Posterior vena cava (tissue), 2 donors: ENCODE measurements at regions of chr1 and their contacts with region 1.

Region 1: GRCh38 chr1:173476664-173477285 is 360 bp upstream of the PRDX6 start:
- DNase-seq: peak; percentile 97

Region 2: GRCh38 chr1:173429471-173430402 is 47.0 kb before region 1 on chr1:
- intact Hi-C with region 1: loop called in 1 of 2 experiments (anchors 5 kb)
- DNase-seq: peak; percentile 97

Region 3: DNA sequence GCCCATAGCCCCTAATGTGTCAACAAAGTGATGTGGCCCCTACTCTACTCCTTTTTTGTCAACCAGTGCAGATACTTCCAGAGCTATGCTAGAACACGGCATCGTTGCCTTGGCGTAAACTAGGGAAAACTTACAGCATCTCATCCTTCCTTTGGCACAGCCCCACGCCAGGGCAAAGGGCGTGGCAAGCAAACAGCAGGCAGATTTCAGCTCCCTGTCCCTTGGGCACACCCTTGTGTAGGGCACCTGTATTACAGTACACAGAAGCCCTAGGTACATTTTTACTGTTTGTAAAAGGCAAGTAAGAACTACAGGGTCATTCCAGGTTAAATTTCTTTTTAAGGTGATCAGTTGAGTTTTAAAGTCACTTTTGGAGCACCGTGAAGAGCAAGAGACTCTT is 29.7 kb after region 1 on chr1:
- intact Hi-C with region 1: no loop called
- DNase-seq: no peak

Region 4: GRCh38 chr1:173714759-173715537 is 238.2 kb after region 1 on chr1 and contains the start of gene KLHL20:
- intact Hi-C with region 1: loop called in 1 of 2 experiments (anchors 2 kb)
- DNase-seq: peak; percentile 93
- total RNA-seq, gene KLHL20: 25.8 to 27.2 TPM